Prostate gland (tissue), 2 donors: ENCODE measurements at regions of chr18 and their contacts with region 1.

Region 1: DNA sequence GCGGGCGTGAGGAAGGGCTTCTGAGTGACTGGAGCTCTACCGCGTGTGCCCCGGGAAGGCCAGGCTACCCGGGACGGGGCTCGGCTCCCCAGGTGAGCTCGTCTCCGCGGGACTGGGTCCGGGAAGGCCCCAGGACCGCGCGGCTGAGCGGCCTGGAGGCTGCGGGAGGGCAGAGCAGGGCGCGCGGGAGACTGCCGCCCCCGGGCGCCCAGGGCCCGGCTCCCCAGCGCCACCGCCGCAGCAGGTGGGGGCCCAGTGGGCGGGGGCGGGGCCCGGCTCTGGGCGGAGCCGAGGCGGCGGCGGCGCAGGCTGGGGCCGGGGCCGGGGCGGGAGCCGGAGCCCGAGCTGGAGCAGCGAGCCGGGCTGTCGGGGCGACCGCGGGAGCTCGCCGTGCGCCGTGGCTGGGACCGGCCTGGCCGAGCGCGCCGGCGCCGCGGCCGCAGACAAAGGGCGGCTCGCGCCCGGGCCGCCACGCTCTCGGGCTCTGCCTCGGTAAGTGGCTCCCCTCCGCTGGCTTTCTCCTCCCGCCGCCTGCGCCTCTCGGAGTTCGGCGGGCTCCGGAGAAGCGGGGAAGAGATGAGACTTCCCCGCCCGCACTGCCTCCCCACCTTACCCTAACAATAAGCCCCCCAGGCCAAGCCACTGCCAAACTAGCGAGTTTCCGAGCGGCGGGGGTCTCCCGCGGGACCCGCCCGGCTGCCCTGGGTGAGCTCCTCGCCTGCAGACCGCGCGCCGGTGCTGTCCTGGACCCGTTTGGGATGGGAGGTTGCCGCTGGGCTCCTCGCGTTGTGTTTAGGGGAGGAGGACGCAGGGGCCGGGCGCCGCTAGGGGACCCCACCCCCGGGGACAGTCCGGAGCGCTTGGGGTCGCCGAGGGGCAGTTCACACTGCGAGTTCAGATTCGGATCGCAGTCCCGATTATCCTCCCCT is at the start of gene MAPK4:
- DNase-seq: peak; percentile 63
- H3K4me3 ChIP-seq: peak within 1 kb of the TSS; percentile 60 to 73
- H3K27ac ChIP-seq: peak within 1 kb of the TSS; percentile 82 to 87
- H3K4me1 ChIP-seq: no peaks in the 10 kb centered on the region
- H3K27me3 ChIP-seq: no peaks in the 10 kb centered on the region
- CTCF ChIP-seq: no peak
- POLR2A ChIP-seq: no peak
- total RNA-seq, gene MAPK4: 10.6 to 12.6 TPM

Region 2: GRCh38 chr18:50111265-50111792 is 448.7 kb before region 1 on chr18:
- intact Hi-C with region 1: no loop called
- DNase-seq: no peak
- H3K4me3 ChIP-seq: no peak overlapping the region
- H3K27ac ChIP-seq: no peak overlapping the region
- H3K4me1 ChIP-seq: no peaks in the 10 kb centered on the region
- H3K27me3 ChIP-seq: no peaks in the 10 kb centered on the region
- CTCF ChIP-seq: peak in 2 of 4 experiments; percentile 31 to 47
- POLR2A ChIP-seq: no peak

Region 3: DNA sequence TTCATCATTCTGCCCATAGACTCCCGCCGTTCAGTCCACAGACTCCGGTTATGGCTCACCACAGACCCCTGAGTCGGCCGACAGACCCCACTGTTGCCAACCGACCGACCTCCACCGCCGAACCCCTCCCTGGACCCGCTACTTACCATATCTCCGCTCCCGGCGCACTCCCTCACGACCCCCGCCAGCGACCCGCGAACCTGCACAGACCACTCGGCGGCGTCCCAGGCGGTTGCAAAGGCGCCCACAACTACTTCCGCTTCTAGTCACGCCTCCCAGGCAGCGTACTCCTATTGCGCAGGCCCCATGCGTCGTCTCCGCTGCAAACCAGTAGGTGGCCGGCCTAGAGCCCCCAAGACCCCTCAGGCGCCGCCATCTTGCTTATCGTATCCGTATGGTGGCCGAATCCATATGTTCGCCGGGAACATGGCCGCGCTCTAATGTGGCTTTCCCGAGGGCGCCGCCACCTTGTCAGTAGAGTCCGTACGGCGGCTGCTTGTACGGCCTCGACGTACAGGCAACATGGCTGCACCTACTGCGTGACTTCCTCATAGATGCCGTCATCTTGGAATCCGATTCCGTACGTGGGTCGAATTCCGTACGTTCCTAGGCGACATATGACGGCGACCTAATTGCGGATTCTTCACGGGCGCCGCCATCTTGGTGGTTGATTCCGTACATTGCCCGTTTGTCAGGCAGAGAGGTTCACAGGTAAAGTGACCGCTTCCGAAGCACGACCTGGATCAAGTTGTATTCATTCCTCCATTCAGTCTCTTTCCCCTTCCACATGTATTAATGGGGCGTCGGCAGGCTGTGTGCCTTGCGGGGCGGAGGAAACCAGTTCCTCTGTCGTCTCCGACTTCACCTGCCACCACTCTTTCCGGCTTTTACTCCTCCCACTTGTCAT is 272.3 kb before region 1 on chr18 and contains the start of gene CXXC1:
- intact Hi-C with region 1: loop called (anchors 10 kb)
- DNase-seq: peak; percentile 98
- H3K4me3 ChIP-seq: peak within 1 kb of the TSS; percentile 66 to 81
- H3K27ac ChIP-seq: peak within 1 kb of the TSS; percentile 81 to 89
- H3K4me1 ChIP-seq: no peaks in the 10 kb centered on the region
- H3K27me3 ChIP-seq: no peaks in the 10 kb centered on the region
- CTCF ChIP-seq: peak in 2 of 4 experiments; percentile 77 to 85
- POLR2A ChIP-seq: peak; percentile 31
- total RNA-seq, gene CXXC1: 61.9 to 87.4 TPM

Region 4: GRCh38 chr18:50507120-50507590 is 52.9 kb before region 1 on chr18:
- intact Hi-C with region 1: loop called (anchors 5 kb)
- DNase-seq: peak; percentile 29
- H3K4me3 ChIP-seq: no peak overlapping the region
- H3K27ac ChIP-seq: no peak overlapping the region
- H3K4me1 ChIP-seq: no peaks in the 10 kb centered on the region
- H3K27me3 ChIP-seq: no peaks in the 10 kb centered on the region
- CTCF ChIP-seq: peak in 3 of 4 experiments; percentile 66 to 83 (median 72)
- POLR2A ChIP-seq: no peak

Region 5: GRCh38 chr18:50649821-50650220 is 89.8 kb after region 1 on chr18:
- intact Hi-C with region 1: loop called (anchors 2 kb)
- DNase-seq: peak; percentile 27
- H3K4me3 ChIP-seq: no peak overlapping the region
- H3K27ac ChIP-seq: peak overlapping the region; percentile 51 to 52
- H3K4me1 ChIP-seq: no peaks in the 10 kb centered on the region
- H3K27me3 ChIP-seq: no peaks in the 10 kb centered on the region
- CTCF ChIP-seq: no peak
- POLR2A ChIP-seq: no peak

Region 6: DNA sequence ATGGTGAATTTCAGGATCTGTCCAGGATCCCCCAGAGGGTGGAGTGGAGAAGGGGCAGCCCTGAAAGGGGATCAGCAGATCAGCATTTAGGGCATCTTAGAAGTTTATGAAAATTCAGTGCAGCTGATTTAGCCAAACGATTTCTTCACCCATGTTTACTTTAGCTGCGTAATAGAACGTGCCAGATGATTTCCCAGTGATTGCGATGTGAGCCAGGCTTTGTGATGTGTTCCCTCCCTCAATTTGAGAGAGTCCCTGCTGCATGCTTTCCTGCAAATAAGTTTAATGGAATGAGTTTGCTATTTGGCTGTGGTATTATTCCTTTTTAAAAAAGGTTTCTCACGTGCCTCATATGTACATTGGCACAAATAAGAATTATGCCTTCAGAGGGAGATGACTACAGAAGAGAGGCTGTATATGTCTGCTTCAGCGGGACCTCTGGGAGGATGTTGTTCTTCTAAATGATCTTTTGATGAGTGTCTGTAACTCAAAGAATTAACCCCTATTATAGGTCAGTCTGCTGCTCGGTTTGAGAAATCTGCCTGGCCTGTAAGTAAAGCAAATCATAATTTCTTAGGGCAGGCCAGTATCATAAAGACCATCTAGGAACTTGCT is 147.9 kb after region 1 on chr18:
- intact Hi-C with region 1: loop called (anchors 5 kb)
- DNase-seq: peak; percentile 43
- H3K4me3 ChIP-seq: no peak overlapping the region
- H3K27ac ChIP-seq: no peak overlapping the region
- H3K4me1 ChIP-seq: peaks cover 5% of the 10 kb centered on the region
- H3K27me3 ChIP-seq: no peaks in the 10 kb centered on the region
- CTCF ChIP-seq: no peak
- POLR2A ChIP-seq: no peak

Region 7: GRCh38 chr18:50751490-50751889 is 191.5 kb after region 1 on chr18:
- intact Hi-C with region 1: loop called (anchors 10 kb)
- DNase-seq: no peak
- H3K4me3 ChIP-seq: no peak overlapping the region
- H3K27ac ChIP-seq: no peak overlapping the region
- H3K4me1 ChIP-seq: no peaks in the 10 kb centered on the region
- H3K27me3 ChIP-seq: no peaks in the 10 kb centered on the region
- CTCF ChIP-seq: no peak
- POLR2A ChIP-seq: no peak

Region 8: DNA sequence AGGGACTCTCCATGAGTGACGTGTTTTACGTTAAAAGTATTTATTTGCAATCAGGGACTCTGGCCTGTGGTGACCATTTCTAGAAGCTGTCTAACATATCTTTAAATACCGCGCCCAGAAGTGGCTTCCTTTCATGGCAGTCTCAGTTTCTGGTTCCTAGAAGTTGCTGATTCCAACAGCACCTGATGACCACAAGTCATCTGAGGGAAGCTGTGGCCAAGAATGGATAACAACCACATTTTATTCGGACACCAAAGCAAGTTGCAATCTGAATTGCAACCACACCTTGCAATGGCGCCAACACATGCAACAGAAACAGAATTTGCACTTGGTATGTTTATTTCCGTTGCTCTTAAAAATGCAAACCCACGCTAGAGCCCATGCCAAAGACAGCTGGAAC is 604.3 kb after region 1 on chr18:
- intact Hi-C with region 1: no loop called
- DNase-seq: no peak
- H3K4me3 ChIP-seq: no peak overlapping the region
- H3K27ac ChIP-seq: no peak overlapping the region
- H3K4me1 ChIP-seq: no peaks in the 10 kb centered on the region
- H3K27me3 ChIP-seq: no peaks in the 10 kb centered on the region
- CTCF ChIP-seq: no peak
- POLR2A ChIP-seq: no peak